ENCODE measurements at regions of chr22 and their contacts with region 1.

Region 1: DNA sequence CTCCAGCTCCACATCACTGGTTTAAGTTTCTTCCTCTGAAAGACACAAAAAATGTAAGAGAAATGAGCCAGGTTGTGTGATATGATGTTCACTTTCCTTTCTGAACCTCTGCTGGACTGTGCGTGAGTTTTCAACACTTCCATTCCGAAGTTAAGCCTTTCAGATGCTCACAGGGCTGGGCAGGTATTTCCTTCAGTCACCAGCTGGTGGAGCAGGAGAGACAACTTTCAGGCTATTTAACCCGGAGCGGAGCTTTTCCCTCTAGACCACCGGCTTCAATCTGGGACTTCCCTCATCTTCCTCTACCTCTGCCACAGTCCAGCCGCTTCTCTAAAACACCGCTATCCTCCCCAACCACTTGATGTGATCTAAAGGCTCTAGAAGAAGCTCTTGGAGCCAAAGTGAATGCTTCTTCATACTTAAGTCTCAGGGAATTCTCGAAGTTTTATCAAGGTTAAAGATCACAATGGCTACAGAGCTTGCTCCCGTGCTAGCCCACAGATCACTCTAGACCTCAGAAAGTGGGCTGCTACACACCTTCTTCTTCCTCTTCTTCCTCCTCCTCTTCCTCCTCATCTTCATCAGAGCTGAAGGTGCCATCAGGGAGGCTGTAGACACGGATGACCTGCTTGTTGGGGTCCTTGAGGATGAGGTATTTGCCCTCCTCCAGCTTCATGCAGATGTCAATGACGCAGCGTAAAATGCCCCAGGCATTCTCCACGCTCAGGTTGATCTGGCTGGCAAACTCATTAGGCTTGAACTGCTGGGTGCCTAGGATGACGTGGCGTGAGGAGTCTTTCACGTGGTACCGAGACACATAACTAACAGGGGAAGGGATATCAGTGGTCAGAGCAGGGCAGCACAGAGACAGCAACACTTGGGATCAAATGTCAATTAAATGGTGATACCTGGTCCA is 4.4 kb upstream of the FOXRED2 start:
- DNase-seq: peak; percentile 55
- ATAC-seq: no peak
- H3K4me3 Mint-ChIP-seq: no peak overlapping the region
- H3K27ac Mint-ChIP-seq: no peak overlapping the region
- H3K4me1 Mint-ChIP-seq: peaks cover 9% of the 10 kb centered on the region
- H3K27me3 Mint-ChIP-seq: no peaks in the 10 kb centered on the region

Region 2: DNA sequence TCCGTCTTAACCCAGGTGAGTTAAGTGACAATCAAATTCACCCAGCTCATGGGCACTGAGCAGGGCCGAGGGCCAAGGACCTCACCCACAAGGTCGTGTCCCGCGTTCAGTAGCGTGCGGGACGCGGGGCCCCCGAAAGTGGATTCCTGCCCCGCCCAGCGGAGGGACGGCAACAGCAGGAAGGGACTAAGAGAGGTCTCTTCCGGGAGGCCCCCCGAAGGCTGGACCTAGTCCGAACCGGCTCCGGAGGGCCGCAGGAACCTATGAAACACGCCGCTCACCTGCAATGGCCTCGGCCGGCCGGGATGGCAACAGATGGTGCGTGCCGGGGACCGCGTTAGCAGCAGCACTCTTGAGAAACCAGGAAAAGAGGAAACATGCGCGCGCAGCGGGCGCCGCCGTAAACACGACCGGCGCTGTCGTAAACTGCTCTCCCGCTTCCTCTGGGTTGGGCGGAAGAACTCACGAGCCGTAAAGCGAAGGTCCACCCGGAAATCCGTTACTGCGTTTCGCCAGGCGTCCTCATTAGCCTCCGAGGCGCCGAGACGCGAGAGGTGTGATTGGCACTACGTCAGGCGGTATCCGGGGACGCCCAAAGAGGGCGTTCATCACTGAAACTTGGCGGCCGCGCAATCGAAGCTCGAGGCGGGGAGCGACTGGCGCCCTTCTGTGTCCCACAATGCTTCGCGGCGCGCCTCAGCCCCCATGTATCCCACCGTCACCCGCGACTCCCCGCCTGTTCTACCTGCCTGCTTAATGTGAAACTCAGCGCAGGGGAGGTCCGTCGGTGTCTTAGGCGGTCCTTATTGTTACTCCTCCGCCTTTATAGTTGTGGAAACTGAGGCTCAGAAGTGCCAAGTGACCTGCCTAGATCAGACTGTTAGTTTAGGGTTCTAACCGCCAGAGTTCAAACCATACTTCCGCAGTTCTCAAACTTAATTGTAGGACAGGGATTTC is 17.8 kb after region 1 on chr22 and contains the start of gene EIF3D:
- CTCF ChIA-PET with region 1: interaction called, 20 read pairs
- DNase-seq: peak; percentile 100
- ATAC-seq: peak; percentile 97
- H3K4me3 Mint-ChIP-seq: peak within 1 kb of the TSS; percentile 84
- H3K27ac Mint-ChIP-seq: peak within 1 kb of the TSS; percentile 98
- H3K4me1 Mint-ChIP-seq: peaks cover 32% of the 10 kb centered on the region
- H3K27me3 Mint-ChIP-seq: no peaks in the 10 kb centered on the region
- total RNA-seq, gene EIF3D: 205 to 232 TPM

Region 3: DNA sequence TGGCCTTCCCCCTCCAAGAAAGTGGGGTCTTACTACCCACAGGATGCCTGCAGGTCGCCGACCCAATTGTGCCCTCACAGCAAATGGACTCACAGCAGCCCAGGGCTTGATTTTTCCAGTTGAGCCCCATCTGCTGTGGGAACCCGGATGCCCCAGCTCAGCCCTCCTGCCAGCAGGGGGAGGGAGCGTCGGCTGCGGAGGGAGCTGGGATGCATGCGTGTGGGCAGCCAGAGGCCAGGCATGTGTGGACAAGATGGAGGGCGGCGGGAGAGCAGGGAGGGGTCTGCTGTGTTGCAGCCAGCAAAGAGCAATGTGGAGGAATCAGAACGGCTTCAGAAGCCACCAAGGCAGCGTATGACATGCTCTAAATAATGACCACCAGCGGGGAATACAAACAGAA is 58.8 kb after region 1 on chr22:
- CTCF ChIA-PET with region 1: no interaction called
- DNase-seq: no peak
- ATAC-seq: no peak
- H3K4me3 Mint-ChIP-seq: no peak overlapping the region
- H3K27ac Mint-ChIP-seq: no peak overlapping the region
- H3K4me1 Mint-ChIP-seq: no peaks in the 10 kb centered on the region
- H3K27me3 Mint-ChIP-seq: peaks cover 21% of the 10 kb centered on the region

Measured in activated CD8-positive, alpha-beta memory T cell treated with anti-CD3 and anti-CD28 coated beads, Interleukin-2, amount 10 ng/mL, durations not matched to agents 7 days and 5 days (primary cell).